Vagina (tissue), 2 donors: ENCODE measurements at regions of chr15 and their contacts with region 1.

Region 1: DNA sequence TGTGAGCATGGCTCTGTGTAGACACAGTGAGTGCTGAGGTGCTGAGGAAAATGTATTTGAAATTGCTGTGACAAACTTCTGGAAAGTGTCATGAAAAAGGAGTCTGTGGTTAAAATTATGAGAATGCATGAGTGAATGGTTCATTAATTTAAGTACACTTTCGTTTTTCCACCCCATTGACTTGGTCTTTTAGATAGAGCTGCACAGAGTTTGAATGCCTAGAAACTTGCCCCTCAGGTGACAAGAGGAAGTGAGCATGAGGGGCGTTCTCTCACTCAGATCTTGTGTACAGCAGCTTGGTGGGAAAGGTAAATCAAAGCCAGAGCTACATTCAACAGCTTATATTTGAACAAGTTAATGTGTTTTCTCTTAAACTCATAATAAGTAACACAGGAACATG is 296.8 kb downstream of the WDR72 start:
- DNase-seq: no peak
- H3K4me3 ChIP-seq: no peak overlapping the region
- H3K27ac ChIP-seq: no peak overlapping the region
- H3K4me1 ChIP-seq: no peaks in the 10 kb centered on the region
- H3K27me3 ChIP-seq: no peaks in the 10 kb centered on the region
- CTCF ChIP-seq: no peak
- POLR2A ChIP-seq: no peak

Region 2: DNA sequence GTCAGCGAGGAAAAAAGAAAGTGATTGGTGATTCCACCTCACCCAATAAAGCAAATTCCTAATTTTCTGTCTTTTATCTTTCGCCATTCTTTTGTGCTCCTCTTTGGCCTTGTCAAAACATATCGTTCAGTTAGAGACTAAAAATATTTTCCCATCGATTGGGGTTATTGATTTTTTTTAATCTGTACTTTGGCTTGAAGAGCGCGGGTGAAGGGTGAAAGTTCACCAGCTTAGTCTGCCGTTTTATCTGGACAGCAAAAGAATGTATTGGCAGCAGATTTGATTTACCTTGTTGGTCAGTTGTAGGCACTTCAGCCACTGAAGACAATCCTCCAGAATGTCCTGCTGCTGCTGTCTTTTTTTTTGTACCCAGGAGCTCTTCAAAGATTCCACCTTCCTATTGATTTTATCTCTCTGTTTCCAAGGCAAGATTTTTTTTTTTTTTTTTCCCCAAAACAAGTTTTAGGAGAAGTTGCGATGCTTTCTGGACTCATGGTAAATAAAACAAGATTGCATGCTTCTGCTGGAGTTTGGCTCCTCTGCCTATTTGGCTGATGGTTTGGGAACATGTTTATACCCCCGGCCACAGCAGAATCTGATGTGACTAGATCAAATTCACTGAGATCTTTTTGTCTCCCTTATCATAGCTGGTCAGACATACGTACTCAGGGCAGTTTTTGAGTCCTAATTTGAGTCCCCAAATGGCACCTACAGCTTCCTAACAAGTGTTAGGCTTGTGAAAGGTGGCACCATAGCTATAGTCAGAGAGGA is 403.2 kb before region 1 on chr15:
- intact Hi-C with region 1: no loop called
- DNase-seq: no peak
- H3K4me3 ChIP-seq: no peak overlapping the region
- H3K27ac ChIP-seq: no peak overlapping the region
- H3K4me1 ChIP-seq: no peaks in the 10 kb centered on the region
- H3K27me3 ChIP-seq: no peaks in the 10 kb centered on the region
- CTCF ChIP-seq: no peak
- POLR2A ChIP-seq: no peak

Region 3: DNA sequence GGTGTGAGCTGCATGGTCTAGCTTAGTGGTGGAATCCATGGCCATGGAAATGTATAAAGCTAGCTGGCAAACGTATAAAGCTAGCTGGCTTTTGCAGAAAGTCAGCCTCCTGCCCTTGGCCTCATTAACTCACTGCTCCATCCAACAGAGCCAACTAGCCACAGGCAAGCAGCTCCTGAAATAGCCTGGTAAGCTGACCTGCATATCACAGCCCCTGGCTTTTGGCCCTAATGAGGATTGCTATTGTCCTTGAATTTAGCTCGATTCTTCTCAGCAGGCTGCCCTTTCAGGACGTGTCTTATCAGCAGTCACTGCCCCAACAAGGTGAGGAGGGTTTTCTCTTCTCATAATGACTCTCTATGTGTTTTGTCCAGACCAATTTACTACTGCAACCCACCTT is 149.9 kb before region 1 on chr15:
- intact Hi-C with region 1: no loop called
- DNase-seq: no peak
- H3K4me3 ChIP-seq: no peak overlapping the region
- H3K27ac ChIP-seq: no peak overlapping the region
- H3K4me1 ChIP-seq: no peaks in the 10 kb centered on the region
- H3K27me3 ChIP-seq: no peaks in the 10 kb centered on the region
- CTCF ChIP-seq: no peak
- POLR2A ChIP-seq: no peak

Region 4: DNA sequence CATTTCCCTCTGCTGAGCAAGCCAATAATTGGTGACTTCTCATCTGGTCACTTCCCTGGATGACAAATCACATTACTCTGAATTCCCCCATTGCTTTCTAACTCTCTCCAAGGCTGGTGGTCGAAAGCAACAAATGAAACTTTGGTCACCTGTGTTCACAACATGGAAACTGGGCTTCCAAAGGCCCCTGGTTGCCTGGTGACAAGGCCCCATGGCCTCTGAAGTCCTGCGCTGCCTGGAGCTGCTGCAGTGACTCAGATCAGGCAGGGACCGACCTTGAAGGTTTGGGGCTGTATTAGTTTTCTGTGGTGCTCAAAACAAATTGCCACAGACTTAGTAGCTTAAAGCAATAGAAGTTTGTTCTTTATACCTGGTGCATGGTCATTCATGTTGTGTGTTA is 48.5 kb before region 1 on chr15:
- intact Hi-C with region 1: loop called (anchors 10 kb)
- DNase-seq: no peak
- H3K4me3 ChIP-seq: no peak overlapping the region
- H3K27ac ChIP-seq: no peak overlapping the region
- H3K4me1 ChIP-seq: no peaks in the 10 kb centered on the region
- H3K27me3 ChIP-seq: no peaks in the 10 kb centered on the region
- CTCF ChIP-seq: no peak
- POLR2A ChIP-seq: no peak